ENCODE measurements at regions of chr17 and their contacts with region 1.

Region 1: GRCh38 chr17:74203439-74204240 is at the start of gene RPL38:
- DNase-seq: peak; percentile 96
- ATAC-seq: peak; percentile 88
- total RNA-seq, gene RPL38: 691 TPM

Region 2: DNA sequence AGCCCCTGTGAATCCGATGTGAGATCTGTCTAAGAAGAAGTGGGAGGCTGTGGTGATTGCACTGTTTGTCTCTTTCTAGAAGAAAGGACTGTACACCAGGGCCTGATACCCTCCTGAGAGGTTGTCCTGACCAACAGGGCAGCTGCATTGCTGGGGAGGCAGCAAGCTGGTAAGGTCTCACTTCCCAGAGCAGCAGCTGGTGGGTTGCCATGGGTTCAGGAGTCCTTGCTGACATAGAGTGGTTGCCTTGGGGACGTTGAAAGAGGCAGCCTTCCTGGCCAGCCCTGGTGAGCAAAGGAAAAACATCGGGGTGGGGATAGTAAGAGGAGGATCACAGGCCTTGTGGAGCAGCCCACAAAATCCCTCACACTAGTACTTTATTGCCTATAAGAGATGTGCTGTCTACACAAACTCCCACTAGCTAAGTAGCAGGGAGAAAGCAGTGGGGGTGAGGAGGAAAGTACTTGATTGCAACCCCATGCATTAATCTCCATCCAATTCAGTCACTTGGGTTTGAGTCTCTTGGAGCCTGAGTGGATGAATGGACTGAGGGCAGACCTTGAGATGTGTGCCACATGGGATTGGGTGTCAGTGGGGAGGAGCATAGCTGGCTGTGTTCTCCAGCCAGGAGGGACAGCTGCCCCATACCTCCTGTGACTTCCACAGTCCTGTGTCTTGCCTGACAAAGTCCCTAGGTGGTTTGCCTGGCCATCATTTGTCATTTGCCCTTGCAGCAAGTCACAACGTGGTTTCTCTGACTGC is 144.0 kb before region 1 on chr17:
- intact Hi-C with region 1: no loop called
- DNase-seq: no peak
- ATAC-seq: no peak

Region 3: GRCh38 chr17:74354123-74354522 is 150.5 kb after region 1 on chr17:
- intact Hi-C with region 1: loop called (anchors 10 kb)
- DNase-seq: peak; percentile 57
- ATAC-seq: no peak

Region 4: GRCh38 chr17:74457146-74457819 is 253.6 kb after region 1 on chr17:
- intact Hi-C with region 1: loop called (anchors 10 kb)
- DNase-seq: peak; percentile 92
- ATAC-seq: no peak

Measured in Right ventricle myocardium superior (tissue), 1 donor.